WTC11 (cell line): ENCODE measurements at regions of chr7 and their contacts with region 1.

Region 1: GRCh38 chr7:108002726-108003598 is at the start of gene LAMB1:
- DNase-seq: peak; percentile 80
- ATAC-seq: peak; percentile 61
- H3K4me3 Mint-ChIP-seq: peak within 1 kb of the TSS; percentile 90
- H3K27ac Mint-ChIP-seq: no peak within 1 kb of the TSS
- H3K4me1 Mint-ChIP-seq: peaks cover 30% of the 10 kb centered on the region
- H3K27me3 Mint-ChIP-seq: peaks cover 69% of the 10 kb centered on the region
- CTCF ChIP-seq: no peak
- total RNA-seq, gene LAMB1: 77.8 to 101 TPM (median 78.4 TPM) in 3 replicates

Region 2: DNA sequence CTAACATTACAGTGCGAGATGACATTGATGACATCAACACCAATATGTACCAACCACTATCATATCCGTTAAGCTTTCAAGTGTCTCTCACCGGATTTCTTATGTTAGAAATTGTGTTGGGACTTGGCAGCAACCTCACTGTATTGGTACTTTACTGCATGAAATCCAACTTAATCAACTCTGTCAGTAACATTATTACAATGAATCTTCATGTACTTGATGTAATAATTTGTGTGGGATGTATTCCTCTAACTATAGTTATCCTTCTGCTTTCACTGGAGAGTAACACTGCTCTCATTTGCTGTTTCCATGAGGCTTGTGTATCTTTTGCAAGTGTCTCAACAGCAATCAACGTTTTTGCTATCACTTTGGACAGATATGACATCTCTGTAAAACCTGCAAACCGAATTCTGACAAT is 528.8 kb before region 1 on chr7:
- CTCF ChIA-PET with region 1: no interaction called
- POLR2A ChIA-PET with region 1: no interaction called
- DNase-seq: no peak
- ATAC-seq: no peak
- H3K4me3 Mint-ChIP-seq: no peak overlapping the region
- H3K27ac Mint-ChIP-seq: no peak overlapping the region
- H3K4me1 Mint-ChIP-seq: peaks cover 5% of the 10 kb centered on the region
- H3K27me3 Mint-ChIP-seq: no peaks in the 10 kb centered on the region
- CTCF ChIP-seq: no peak

Region 3: DNA sequence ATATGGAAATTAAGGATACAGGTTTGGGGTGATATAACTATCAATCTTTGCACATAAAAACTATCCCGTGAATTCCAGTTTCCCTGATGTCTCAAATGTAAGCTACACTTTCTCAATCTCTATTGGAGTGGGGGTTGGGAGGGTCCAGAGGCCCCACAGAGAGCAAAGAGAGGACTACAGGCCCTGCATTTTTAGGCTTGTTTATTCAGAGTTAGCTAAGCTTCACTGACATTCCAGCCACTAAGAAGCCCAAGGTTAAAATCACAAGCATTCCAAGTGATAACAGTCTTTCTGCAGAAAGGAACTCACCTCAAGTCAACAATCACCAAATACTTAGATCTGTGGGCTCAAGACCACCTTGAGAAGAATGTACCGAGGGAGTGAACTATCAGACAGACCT is 31.6 kb after region 1 on chr7:
- CTCF ChIA-PET with region 1: interaction called, 14 read pairs
- POLR2A ChIA-PET with region 1: interaction called, 5 read pairs
- DNase-seq: no peak
- ATAC-seq: peak; percentile 94
- H3K4me3 Mint-ChIP-seq: peak overlapping the region; percentile 3; the same call in 1 of the 2 replicates
- H3K27ac Mint-ChIP-seq: peak overlapping the region; percentile 87
- H3K4me1 Mint-ChIP-seq: peaks cover 22% of the 10 kb centered on the region
- H3K27me3 Mint-ChIP-seq: no peaks in the 10 kb centered on the region
- CTCF ChIP-seq: no peak